ENCODE measurements at regions of chr10 and their contacts with region 1.

Region 1: DNA sequence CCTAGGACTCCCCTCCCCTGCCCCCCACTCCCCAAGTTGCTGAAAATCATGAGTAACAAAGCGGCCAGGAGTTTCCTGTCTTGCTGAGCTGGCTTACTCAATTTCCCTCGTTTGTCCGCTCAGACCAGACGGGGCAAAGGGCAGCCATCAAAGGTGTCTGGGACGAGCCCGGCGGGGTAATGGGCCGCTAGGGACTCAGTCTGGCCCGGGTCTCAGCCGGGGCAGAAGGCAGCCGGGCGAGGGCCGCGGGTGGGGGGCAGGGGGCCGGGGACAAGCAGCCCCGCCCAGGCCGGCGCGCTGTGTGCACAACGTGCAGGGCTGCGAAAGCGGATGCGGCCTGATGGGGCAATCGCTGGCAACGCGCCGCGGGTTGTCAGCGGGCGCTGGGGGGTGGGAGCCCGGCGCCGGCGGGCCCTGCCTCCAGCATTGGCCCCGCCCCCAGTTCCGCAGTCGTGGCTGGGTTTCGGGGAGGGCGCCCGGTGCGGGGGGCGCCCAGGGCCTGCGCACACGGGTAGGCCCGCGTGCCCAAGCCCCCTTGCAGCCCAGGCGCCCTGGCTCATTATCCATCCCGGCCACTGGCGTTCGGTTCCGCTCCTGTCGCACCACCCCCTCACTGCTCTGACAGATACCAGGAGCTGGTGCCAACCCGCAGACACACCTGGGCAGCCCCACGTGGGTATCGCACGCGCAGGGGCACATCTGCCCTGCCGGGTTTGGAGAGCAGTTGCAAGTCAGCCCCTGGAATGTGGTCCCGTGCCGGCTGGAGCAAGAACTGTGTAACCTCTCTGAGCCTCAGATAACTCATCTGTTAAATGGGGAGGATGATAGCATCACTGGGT is 35.1 kb downstream of the DNAJB12 start:
- DNase-seq: no peak
- H3K4me3 ChIP-seq: peak overlapping the region; percentile 24
- CTCF ChIP-seq: no peak

Region 2: DNA sequence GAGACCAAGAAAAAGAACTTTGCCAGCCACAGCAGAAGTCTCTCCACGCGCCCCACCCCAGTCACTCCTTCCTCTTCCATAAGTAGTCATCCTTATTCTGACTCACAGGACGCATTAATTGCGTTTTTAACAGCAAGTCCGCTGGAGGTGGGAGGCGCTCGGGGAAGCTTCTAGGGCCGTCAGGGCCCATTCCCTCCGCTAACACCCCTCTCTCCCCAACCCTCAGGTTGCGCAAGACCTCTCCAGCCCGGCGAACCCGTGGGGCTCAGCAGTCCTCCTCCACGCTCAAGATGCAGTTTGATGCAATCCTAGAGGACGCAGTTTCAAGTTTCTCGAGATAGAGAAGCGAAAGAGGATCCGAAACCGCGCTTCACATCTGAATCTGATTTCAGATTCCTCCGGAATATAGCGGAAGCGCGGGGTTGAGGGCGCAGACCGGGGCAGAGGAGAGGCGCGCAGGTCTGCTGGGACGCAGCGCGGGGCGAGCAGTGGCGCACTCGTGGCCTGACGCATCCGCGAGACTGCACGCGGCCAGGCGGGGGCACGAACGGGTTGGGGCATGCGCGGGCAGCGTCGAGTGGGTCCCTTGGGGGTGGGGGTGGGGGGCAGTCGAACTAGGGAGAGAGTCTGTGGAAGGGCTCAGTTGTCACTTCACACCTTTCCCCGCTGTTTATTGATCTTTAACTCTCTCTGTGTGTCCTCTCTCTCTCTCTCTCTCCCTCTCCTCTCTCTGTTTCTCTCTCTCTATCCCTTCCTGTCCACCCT is 430.8 kb before region 1 on chr10:
- in situ Hi-C with region 1: loop called (anchors 25 kb)
- DNase-seq: peak; percentile 23
- H3K4me3 ChIP-seq: peak overlapping the region; percentile 41
- CTCF ChIP-seq: peak; percentile 10

Region 3: GRCh38 chr10:72126184-72126871 is 193.3 kb before region 1 on chr10:
- in situ Hi-C with region 1: loop called (anchors 5 kb)
- DNase-seq: peak; percentile 36
- H3K4me3 ChIP-seq: no peak overlapping the region
- CTCF ChIP-seq: peak; percentile 50